Ascending aorta (tissue), 2 donors: ENCODE measurements at regions of chr3 and their contacts with region 1.

Region 1: DNA sequence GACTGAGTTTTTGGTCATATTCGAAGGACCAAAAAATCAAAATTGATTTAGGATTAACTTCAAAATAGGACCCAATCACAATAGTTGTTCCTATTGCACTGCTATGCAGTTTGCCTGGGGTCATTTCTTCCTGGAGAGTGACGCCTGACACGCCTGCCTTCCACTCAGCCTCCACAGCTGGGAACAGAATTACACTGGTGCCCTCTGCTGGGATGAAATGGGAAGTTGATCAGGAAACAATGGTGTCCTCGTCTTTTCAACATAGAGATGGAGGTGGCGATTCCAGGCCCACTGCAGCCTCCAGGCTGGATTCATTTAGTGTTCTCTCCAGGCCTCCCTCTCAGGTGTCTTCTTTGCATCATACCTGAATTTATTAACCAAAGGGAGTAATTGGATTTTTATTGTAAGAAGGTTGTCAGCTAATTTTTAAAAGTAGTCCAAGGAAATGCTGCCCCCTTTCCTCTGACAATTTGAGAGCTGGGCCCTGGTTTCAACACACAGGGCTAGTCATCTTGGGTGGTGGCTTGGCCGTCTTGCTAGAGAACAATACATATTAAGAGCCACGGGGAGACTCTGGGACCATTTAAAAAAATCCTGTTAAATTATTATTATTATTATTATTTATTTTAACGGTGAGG is 69.7 kb downstream of the GAP43 start:
- DNase-seq: peak in 1 of 2 donors; percentile 90
- H3K4me3 ChIP-seq: no peak overlapping the region
- H3K27ac ChIP-seq: no peak overlapping the region
- H3K4me1 ChIP-seq: no peaks in the 10 kb centered on the region
- H3K27me3 ChIP-seq: no peaks in the 10 kb centered on the region
- CTCF ChIP-seq: peak; percentile 75 to 85 (median 77)

Region 2: GRCh38 chr3:115092220-115092791 is 600.7 kb before region 1 on chr3:
- intact Hi-C with region 1: loop called (anchors 5 kb)
- DNase-seq: peak in 1 of 2 donors; percentile 74
- H3K4me3 ChIP-seq: no peak overlapping the region
- H3K27ac ChIP-seq: no peak overlapping the region
- H3K4me1 ChIP-seq: peaks cover 0 to 8% of the 10 kb centered on the region in 2 donors
- H3K27me3 ChIP-seq: no peaks in the 10 kb centered on the region
- CTCF ChIP-seq: peak; percentile 1 to 55 (median 52)

Region 3: GRCh38 chr3:115217678-115218451 is 475.1 kb before region 1 on chr3:
- intact Hi-C with region 1: loop called (anchors 1 kb)
- DNase-seq: no peak
- H3K4me3 ChIP-seq: peak overlapping the region in 1 of 2 donors; percentile 28
- H3K27ac ChIP-seq: no peak overlapping the region
- H3K4me1 ChIP-seq: peaks cover 2 to 4% of the 10 kb centered on the region in 2 donors
- H3K27me3 ChIP-seq: no peaks in the 10 kb centered on the region
- CTCF ChIP-seq: peak; percentile 56 to 74 (median 62)

Region 4: DNA sequence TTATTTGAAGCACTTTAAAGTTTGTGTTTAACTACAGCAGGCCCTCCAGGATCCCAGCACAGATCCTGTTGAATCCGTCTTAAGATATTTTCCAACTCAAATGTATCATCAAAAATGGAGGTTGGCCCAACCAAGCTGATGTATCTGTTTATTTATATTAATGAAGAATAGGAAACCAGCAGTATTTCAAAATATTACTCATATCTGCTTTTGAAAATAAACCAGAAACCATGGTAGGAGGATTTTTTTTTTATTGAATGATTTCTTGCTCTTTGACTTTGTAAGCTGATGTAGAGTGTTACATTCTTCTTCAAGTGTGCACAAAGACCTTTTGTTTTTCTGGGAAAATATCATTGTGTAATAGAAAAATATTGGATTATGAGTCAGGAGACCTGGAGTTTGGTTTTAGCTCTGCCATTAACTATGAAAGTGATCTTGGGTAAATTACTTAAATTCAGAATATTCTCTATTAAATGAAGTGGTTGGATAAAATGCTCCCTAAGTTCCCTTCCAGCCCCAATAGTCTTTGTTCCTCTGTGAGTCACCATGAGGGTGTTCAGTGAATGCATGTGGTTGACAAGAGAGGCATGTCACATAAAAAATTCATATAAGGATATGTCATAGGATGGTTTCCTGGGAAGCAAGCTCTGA is 291.0 kb before region 1 on chr3:
- intact Hi-C with region 1: loop called (anchors 5 kb)
- DNase-seq: no peak
- H3K4me3 ChIP-seq: no peak overlapping the region
- H3K27ac ChIP-seq: peak overlapping the region; percentile 80 to 85
- H3K4me1 ChIP-seq: peaks cover 0 to 6% of the 10 kb centered on the region in 2 donors
- H3K27me3 ChIP-seq: no peaks in the 10 kb centered on the region
- CTCF ChIP-seq: no peak

Region 5: GRCh38 chr3:115549071-115549470 is 143.9 kb before region 1 on chr3:
- intact Hi-C with region 1: loop called (anchors 10 kb)
- DNase-seq: no peak
- H3K4me3 ChIP-seq: no peak overlapping the region
- H3K27ac ChIP-seq: peak overlapping the region in 1 of 2 donors; percentile 1
- H3K4me1 ChIP-seq: peaks cover 0 to 11% of the 10 kb centered on the region in 2 donors
- H3K27me3 ChIP-seq: no peaks in the 10 kb centered on the region
- CTCF ChIP-seq: no peak

Region 6: GRCh38 chr3:115713284-115713683 is 20.3 kb after region 1 on chr3:
- intact Hi-C with region 1: no loop called
- DNase-seq: no peak
- H3K4me3 ChIP-seq: no peak overlapping the region
- H3K27ac ChIP-seq: no peak overlapping the region
- H3K4me1 ChIP-seq: no peaks in the 10 kb centered on the region
- H3K27me3 ChIP-seq: no peaks in the 10 kb centered on the region
- CTCF ChIP-seq: no peak

Region 7: GRCh38 chr3:115819785-115820384 is 126.9 kb after region 1 on chr3:
- intact Hi-C with region 1: loop called (anchors 10 kb)
- DNase-seq: peak; percentile 11 to 83
- H3K4me3 ChIP-seq: no peak overlapping the region
- H3K27ac ChIP-seq: no peak overlapping the region
- H3K4me1 ChIP-seq: no peaks in the 10 kb centered on the region
- H3K27me3 ChIP-seq: no peaks in the 10 kb centered on the region
- CTCF ChIP-seq: peak; percentile 68 to 94 (median 89)